ENCODE measurements at regions of chr20 and their contacts with region 1.

Region 1: DNA sequence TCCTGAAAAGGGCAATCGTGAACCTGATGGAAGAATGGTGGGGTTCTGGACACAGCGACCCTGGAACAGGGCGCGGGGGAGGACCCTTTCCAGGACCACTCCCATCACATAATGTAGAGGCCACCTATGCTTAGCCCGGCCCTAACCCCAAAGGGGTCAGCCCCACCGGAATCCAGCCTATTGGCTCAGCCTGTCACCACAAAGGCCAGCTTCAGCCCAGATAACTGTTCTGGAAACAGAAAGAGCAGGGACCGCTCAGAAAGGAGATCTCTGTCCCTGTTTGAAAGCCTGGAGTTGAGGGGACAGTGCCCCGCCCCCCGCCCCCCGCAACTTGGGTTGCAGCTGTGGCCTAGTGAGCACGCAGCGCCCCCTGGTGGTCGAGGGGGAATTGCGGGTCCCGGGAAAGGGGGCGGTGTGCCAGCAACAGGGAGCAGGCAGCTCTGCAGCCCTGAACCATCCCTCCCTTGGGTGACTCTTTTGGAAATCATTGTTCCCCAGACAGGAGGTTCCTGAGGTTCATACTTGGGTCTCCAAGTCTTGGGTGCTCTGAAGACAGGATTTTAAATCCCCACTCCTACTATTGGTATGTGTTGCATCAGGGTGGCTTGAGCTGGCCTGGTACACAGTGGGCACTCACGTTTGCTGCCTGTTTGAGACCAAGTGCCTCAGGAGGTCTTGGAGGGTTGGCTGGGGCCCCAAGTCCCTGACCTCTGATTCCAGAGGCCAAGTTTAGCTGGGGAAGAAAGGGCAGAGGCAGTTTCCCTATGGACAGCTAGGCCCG is 1.5 kb downstream of the SIGLEC1 start:
- DNase-seq: peak; percentile 86
- ATAC-seq: peak; percentile 42

Region 2: DNA sequence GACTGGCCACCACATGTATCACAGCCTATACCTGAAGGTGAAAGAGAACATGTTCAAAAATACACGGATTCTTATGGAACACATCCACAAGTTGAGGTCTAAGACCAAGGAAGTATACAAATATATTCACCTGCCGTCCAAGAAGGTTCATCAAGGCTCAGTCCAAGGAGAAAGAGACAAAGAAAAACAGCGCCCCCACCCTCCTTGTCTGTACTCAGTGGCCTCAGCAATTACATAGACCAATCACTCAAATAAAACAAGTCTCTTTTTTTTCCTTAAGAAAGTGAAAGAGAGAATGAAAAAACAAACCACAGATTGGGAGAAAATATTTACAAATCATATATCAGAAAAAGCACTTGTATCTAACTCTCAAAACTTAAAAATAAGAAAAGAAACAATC is 929.9 kb before region 1 on chr20:
- intact Hi-C with region 1: loop called (anchors 10 kb)
- DNase-seq: no peak
- ATAC-seq: no peak

Region 3: GRCh38 chr20:3446779-3447178 is 264.1 kb before region 1 on chr20:
- intact Hi-C with region 1: no loop called
- DNase-seq: no peak
- ATAC-seq: no peak